Adrenal gland (tissue), 19 donors: ENCODE measurements at regions of chr7 and their contacts with region 1.

Region 1: DNA sequence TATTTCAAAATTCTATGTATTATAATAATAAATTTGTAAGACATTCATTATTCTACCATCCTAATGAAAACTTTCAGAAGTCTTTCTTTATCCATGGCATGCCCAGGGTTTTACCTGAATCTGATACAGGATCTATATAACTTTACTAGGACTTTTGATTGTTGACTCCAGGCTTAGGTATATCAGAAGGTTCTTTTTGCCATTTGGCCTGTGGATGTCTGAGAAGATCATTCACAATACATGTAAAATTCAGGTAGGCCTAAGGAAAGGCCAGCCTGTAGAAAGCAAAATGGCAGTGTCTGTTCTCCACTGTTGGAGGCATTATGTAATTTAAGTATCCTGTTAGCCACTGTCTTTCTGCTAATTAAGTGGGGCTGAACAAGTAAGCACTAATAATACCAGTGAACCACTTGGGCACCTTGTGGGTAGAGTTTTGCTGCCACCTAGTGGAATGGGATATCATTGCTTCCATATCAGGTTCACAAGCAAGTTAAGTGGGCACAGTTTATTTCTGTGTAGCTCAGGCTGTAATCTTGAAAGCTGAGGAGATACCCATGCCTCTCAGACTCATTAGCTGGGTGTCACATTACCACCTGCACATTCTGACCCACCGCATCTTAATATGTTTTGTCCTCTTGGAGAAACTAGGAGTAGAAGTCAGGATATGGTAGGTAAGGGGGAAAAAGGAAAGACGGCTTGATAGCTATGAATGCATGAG is 105.5 kb downstream of the SEPTIN7 start:
- DNase-seq: peak; percentile 48 to 89 (median 71)
- H3K4me3 ChIP-seq: no peak overlapping the region
- H3K27ac ChIP-seq: no peak overlapping the region
- H3K4me1 ChIP-seq: no peaks in the 10 kb centered on the region
- H3K27me3 ChIP-seq: no peaks in the 10 kb centered on the region
- CTCF ChIP-seq: peak; percentile 86 to 97 (median 96)
- POLR2A ChIP-seq: no peak

Region 2: GRCh38 chr7:35707422-35707821 is 198.9 kb before region 1 on chr7:
- intact Hi-C with region 1: loop called (anchors 5 kb)
- DNase-seq: no peak
- H3K4me3 ChIP-seq: no peak overlapping the region
- H3K27ac ChIP-seq: no peak overlapping the region
- H3K4me1 ChIP-seq: peaks cover 4 to 6% of the 10 kb centered on the region in 2 donors
- H3K27me3 ChIP-seq: no peaks in the 10 kb centered on the region
- CTCF ChIP-seq: no peak
- POLR2A ChIP-seq: no peak

Region 3: DNA sequence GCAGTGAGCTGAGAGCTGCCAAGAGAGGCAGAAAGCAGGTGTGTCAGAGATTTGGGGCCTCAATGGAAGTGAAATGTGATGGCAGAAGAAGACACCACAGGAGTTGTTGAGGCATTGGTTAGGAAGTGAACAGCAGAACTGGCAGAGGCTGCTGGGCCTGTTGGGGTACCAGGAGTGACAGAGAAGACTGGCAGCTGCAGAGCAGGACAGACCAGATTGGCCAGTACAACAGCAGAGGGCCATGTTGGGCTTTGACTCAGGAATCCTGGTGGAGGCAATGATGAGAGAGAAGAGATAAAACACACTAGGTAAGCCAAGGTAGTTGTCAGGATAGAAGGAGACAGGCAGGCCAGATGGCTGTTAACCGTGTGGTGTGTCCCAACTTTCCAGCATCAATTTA is 191.5 kb before region 1 on chr7:
- intact Hi-C with region 1: loop called in 1 of 2 experiments (anchors 5 kb)
- DNase-seq: no peak
- H3K4me3 ChIP-seq: no peak overlapping the region
- H3K27ac ChIP-seq: no peak overlapping the region
- H3K4me1 ChIP-seq: peaks cover 0 to 3% of the 10 kb centered on the region in 2 donors
- H3K27me3 ChIP-seq: no peaks in the 10 kb centered on the region
- CTCF ChIP-seq: no peak
- POLR2A ChIP-seq: no peak

Region 4: GRCh38 chr7:35801392-35802101 is 104.8 kb before region 1 on chr7:
- intact Hi-C with region 1: loop called (anchors 10 kb)
- DNase-seq: peak; percentile 74 to 84 (median 77)
- H3K4me3 ChIP-seq: peak overlapping the region; percentile 84 to 97 (median 92)
- H3K27ac ChIP-seq: peak overlapping the region; percentile 78 to 98 (median 95)
- H3K4me1 ChIP-seq: peaks cover 4 to 49% of the 10 kb centered on the region in 2 donors
- H3K27me3 ChIP-seq: no peaks in the 10 kb centered on the region
- CTCF ChIP-seq: peak; percentile 35 to 67 (median 54)
- POLR2A ChIP-seq: no peak